Ovary (tissue), 10 donors: ENCODE measurements at regions of chr3 and their contacts with region 1.

Region 1: GRCh38 chr3:191792580-191792979 is 331.6 kb downstream of the PYDC2 start:
- DNase-seq: no peak
- H3K4me3 ChIP-seq: no peak overlapping the region
- H3K27ac ChIP-seq: no peak overlapping the region
- H3K4me1 ChIP-seq: no peaks in the 10 kb centered on the region
- H3K27me3 ChIP-seq: no peaks in the 10 kb centered on the region
- CTCF ChIP-seq: no peak
- EP300 ChIP-seq: no peak
- POLR2A ChIP-seq: no peak

Region 2: GRCh38 chr3:191809326-191809949 is 16.9 kb after region 1 on chr3:
- intact Hi-C with region 1: loop called in 1 of 4 experiments (anchors 1 kb)
- DNase-seq: no peak
- H3K4me3 ChIP-seq: no peak overlapping the region
- H3K27ac ChIP-seq: no peak overlapping the region
- H3K4me1 ChIP-seq: no peaks in the 10 kb centered on the region
- H3K27me3 ChIP-seq: no peaks in the 10 kb centered on the region
- CTCF ChIP-seq: no peak
- EP300 ChIP-seq: no peak
- POLR2A ChIP-seq: no peak

Region 3: DNA sequence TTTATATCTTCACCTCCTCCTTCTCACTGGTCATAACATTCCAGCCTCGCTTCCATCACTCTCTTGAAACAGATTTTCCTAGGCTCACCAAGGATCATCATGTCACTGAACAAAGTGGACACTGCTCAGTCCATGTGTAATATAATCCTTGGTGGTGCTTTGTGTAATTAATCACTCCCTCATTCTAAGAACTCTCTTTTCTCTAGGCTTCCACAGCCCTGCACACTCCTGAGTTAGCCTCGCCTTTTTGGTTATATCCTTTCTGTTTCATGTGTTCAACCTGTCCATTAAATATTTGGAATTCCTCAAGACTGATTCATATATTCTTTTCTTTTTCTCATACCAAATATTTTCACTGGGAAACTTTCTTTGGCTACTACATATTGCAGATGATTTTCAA is 109.2 kb after region 1 on chr3:
- intact Hi-C with region 1: no loop called
- DNase-seq: no peak
- H3K4me3 ChIP-seq: no peak overlapping the region
- H3K27ac ChIP-seq: no peak overlapping the region
- H3K4me1 ChIP-seq: no peaks in the 10 kb centered on the region
- H3K27me3 ChIP-seq: no peaks in the 10 kb centered on the region
- CTCF ChIP-seq: no peak
- EP300 ChIP-seq: no peak
- POLR2A ChIP-seq: no peak